Caco-2 (cell line): ENCODE measurements at regions of chr12 and their contacts with region 1.

Region 1: GRCh38 chr12:50074936-50075807 is 10.0 kb upstream of the SMARCD1 start:
- DNase-seq: peak; percentile 91 to 95
- H3K4me3 ChIP-seq: no peak overlapping the region
- H3K4me3 Mint-ChIP-seq: peak overlapping the region; percentile 36
- H3K27ac Mint-ChIP-seq: peak overlapping the region; percentile 66
- H3K4me1 ChIP-seq: peaks cover 20% of the 10 kb centered on the region
- H3K4me1 Mint-ChIP-seq: peaks cover 21% of the 10 kb centered on the region
- H3K27me3 ChIP-seq: no peaks in the 10 kb centered on the region
- H3K27me3 Mint-ChIP-seq: no peaks in the 10 kb centered on the region
- CTCF ChIP-seq: peak; percentile 95 to 97

Region 2: GRCh38 chr12:49776413-49776812 is 298.8 kb before region 1 on chr12:
- CTCF ChIA-PET with region 1: no interaction called
- POLR2A ChIA-PET with region 1: no interaction called
- intact Hi-C with region 1: loop called (anchors 1 kb)
- DNase-seq: peak; percentile 76 to 84
- H3K4me3 ChIP-seq: no peak overlapping the region
- H3K4me3 Mint-ChIP-seq: no peak overlapping the region
- H3K27ac Mint-ChIP-seq: peak overlapping the region; percentile 37
- H3K4me1 ChIP-seq: no peaks in the 10 kb centered on the region
- H3K4me1 Mint-ChIP-seq: peaks cover 10% of the 10 kb centered on the region
- H3K27me3 ChIP-seq: no peaks in the 10 kb centered on the region
- H3K27me3 Mint-ChIP-seq: peaks cover 8% of the 10 kb centered on the region
- CTCF ChIP-seq: peak; percentile 86 to 93

Region 3: DNA sequence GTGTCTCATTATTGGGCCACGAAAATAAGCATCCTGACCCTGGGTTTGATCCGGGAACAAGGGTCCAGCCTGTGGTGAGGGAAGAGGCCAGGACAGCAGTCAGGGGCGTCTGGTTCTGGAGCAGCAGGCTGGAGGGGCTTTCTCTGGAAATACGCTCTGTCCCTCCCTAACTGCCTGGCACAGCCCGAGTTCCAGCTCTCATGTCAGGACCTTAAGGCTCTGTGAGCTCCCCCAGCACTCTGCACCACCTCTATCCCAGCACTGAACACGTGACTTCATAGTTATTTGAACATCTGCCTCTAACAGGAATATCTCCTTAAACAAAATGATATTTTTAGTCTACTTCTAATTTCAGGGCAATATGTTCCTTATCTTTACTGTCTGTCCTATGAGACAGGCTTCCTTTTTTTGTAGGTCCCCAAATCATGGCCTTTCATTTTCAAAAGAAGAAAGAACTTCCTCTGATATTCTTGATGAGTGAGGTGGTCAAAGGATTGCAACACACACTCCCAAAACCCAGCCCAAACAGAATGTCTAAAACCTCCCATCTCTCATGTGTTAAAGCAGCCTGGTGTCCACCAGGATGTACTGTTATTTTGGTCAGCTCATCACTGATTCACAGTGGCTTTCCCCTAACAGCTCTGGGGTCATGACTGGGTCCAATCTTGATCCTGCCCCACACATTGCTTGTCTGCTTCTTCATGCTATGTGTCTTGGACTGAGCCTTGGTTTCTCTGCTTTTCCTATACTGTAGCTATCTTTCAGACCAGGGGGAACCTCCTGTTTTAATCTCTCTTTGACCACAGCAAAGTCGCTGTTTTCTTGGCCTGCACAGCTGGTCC is 92.7 kb before region 1 on chr12:
- CTCF ChIA-PET with region 1: interaction called, 12 read pairs
- POLR2A ChIA-PET with region 1: no interaction called
- intact Hi-C with region 1: no loop called
- DNase-seq: no peak
- H3K4me3 ChIP-seq: no peak overlapping the region
- H3K4me3 Mint-ChIP-seq: no peak overlapping the region
- H3K27ac Mint-ChIP-seq: no peak overlapping the region
- H3K4me1 ChIP-seq: peaks cover 19% of the 10 kb centered on the region
- H3K4me1 Mint-ChIP-seq: peaks cover 12% of the 10 kb centered on the region
- H3K27me3 ChIP-seq: no peaks in the 10 kb centered on the region
- H3K27me3 Mint-ChIP-seq: no peaks in the 10 kb centered on the region
- CTCF ChIP-seq: no peak

Region 4: DNA sequence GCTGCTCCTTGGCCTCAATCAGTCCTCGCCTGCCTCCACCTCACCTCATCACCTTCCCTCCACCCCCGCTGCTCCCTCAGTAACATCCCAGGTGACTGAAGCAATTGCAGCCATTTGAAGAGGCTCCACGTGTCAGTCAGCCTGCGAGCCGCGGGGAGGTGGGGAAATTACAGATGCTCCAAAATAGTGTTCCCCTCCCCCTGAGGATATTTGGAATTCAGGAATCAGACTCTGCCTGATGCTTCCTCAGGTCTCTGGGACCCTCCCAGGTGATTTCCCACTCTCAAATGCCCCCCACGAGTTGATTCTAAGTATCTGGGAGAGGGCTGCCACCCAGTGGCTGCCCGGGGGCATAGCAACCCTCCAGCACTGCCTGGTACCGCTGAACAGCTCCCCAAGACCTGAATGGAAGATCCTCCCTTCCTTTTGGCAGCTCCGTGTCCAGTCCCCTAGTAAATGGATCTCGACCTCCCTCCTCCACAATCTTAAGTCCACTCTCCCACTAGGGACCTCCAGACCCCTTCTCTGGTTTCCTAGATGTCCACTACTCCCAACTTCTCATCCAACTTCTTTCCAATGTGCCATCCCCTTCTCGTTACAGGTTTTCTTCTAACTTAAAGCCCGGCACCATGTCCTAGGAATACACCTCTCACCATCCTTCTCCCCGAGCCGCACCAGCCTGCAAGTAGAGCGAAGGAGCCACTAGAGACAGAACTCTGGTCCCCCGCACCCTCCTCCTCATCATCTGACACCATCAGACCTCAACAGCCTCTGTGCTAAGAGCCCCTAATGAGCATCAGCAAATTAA is 19.1 kb before region 1 on chr12:
- CTCF ChIA-PET with region 1: interaction called, 31 read pairs
- POLR2A ChIA-PET with region 1: no interaction called
- intact Hi-C with region 1: loop called (anchors 1 kb)
- DNase-seq: peak; percentile 75 to 76
- H3K4me3 ChIP-seq: peak overlapping the region; percentile 20
- H3K4me3 Mint-ChIP-seq: peak overlapping the region; percentile 94
- H3K27ac Mint-ChIP-seq: peak overlapping the region; percentile 40
- H3K4me1 ChIP-seq: peaks cover 22% of the 10 kb centered on the region
- H3K4me1 Mint-ChIP-seq: peaks cover 24% of the 10 kb centered on the region
- H3K27me3 ChIP-seq: no peaks in the 10 kb centered on the region
- H3K27me3 Mint-ChIP-seq: peaks cover 2% of the 10 kb centered on the region
- CTCF ChIP-seq: peak; percentile 99

Region 5: DNA sequence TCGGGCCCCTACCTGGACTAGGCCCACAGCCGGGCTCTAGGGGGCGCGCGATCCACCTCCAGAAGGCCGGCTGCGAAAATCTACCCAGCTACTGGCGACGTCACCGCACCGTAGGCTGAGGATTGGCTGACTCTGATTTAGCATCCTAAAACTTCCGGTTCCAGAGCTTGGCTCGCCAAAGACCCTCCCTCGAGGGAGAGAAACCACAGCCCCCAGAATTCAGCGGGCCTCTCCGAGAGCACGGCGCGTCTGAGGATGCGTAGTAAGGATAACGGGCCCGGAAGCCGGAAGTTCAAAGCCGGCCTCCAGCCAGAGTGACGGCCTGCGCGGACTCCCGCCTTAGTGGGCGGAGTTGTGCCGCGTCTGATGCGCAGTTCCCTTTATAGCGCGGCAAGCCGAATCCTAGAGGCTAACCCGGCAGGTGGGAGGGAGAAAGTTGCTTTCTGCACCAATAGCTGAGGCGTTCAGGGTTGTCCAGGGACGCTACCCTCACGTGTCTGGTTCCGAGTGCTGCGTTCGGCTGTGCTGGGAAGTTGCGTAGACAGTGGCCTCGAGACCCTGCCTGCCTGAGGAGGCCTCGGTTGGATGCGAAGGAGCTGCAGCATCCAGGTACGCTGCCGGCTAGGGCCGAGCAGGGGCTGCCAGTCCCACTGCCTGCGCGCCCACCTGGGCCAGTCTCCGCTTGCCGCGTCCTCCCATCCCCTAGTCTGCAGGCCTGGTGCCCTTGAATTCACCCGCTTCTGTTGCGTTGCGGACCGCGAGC is 36.7 kb after region 1 on chr12 and contains the start of gene COX14:
- CTCF ChIA-PET with region 1: interaction called, 22 read pairs
- POLR2A ChIA-PET with region 1: interaction called, 3 read pairs
- intact Hi-C with region 1: loop called (anchors 1 kb)
- DNase-seq: peak; percentile 100
- H3K4me3 ChIP-seq: peak within 1 kb of the TSS; percentile 80
- H3K4me3 Mint-ChIP-seq: peak within 1 kb of the TSS; percentile 100
- H3K27ac Mint-ChIP-seq: peak within 1 kb of the TSS; percentile 97
- H3K4me1 ChIP-seq: peaks cover 24% of the 10 kb centered on the region
- H3K4me1 Mint-ChIP-seq: peaks cover 17% of the 10 kb centered on the region
- H3K27me3 ChIP-seq: no peaks in the 10 kb centered on the region
- H3K27me3 Mint-ChIP-seq: no peaks in the 10 kb centered on the region
- CTCF ChIP-seq: peak; percentile 94 to 97
- total RNA-seq, gene COX14: 85.0 and 86.3 TPM in 2 replicates

Region 6: GRCh38 chr12:50174971-50175715 is 100.0 kb after region 1 on chr12:
- CTCF ChIA-PET with region 1: interaction called, 7 read pairs
- POLR2A ChIA-PET with region 1: no interaction called
- intact Hi-C with region 1: loop called (anchors 1 kb)
- DNase-seq: peak in 1 of 2 experiments; percentile 80
- H3K4me3 ChIP-seq: no peak overlapping the region
- H3K4me3 Mint-ChIP-seq: no peak overlapping the region
- H3K27ac Mint-ChIP-seq: no peak overlapping the region
- H3K4me1 ChIP-seq: peaks cover 6% of the 10 kb centered on the region; the same call in 1 of the 2 replicates
- H3K4me1 Mint-ChIP-seq: no peaks in the 10 kb centered on the region
- H3K27me3 ChIP-seq: no peaks in the 10 kb centered on the region
- H3K27me3 Mint-ChIP-seq: no peaks in the 10 kb centered on the region
- CTCF ChIP-seq: peak; percentile 45 to 72

Region 7: GRCh38 chr12:50222275-50222795 is 147.2 kb after region 1 on chr12:
- CTCF ChIA-PET with region 1: no interaction called
- POLR2A ChIA-PET with region 1: no interaction called
- intact Hi-C with region 1: no loop called
- DNase-seq: peak in 1 of 2 experiments; percentile 33
- H3K4me3 ChIP-seq: no peak overlapping the region
- H3K4me3 Mint-ChIP-seq: no peak overlapping the region
- H3K27ac Mint-ChIP-seq: no peak overlapping the region
- H3K4me1 ChIP-seq: peaks cover 26% of the 10 kb centered on the region; the same call in 1 of the 2 replicates
- H3K4me1 Mint-ChIP-seq: no peaks in the 10 kb centered on the region
- H3K27me3 ChIP-seq: no peaks in the 10 kb centered on the region
- H3K27me3 Mint-ChIP-seq: no peaks in the 10 kb centered on the region
- CTCF ChIP-seq: peak in 1 of 2 experiments; percentile 17

Region 8: GRCh38 chr12:50261654-50262053 is 186.5 kb after region 1 on chr12:
- CTCF ChIA-PET with region 1: no interaction called
- POLR2A ChIA-PET with region 1: no interaction called
- intact Hi-C with region 1: no loop called
- DNase-seq: no peak
- H3K4me3 ChIP-seq: no peak overlapping the region
- H3K4me3 Mint-ChIP-seq: no peak overlapping the region
- H3K27ac Mint-ChIP-seq: no peak overlapping the region
- H3K4me1 ChIP-seq: peaks cover 24% of the 10 kb centered on the region
- H3K4me1 Mint-ChIP-seq: peaks cover 29% of the 10 kb centered on the region
- H3K27me3 ChIP-seq: no peaks in the 10 kb centered on the region
- H3K27me3 Mint-ChIP-seq: no peaks in the 10 kb centered on the region
- CTCF ChIP-seq: no peak